A673 (cell line): ENCODE measurements at regions of chr6 and their contacts with region 1.

Region 1: GRCh38 chr6:133512410-133513016 is 271.4 kb downstream of the EYA4 start:
- DNase-seq: peak; percentile 76
- H3K4me3 ChIP-seq: no peak overlapping the region
- H3K27ac ChIP-seq: no peak overlapping the region
- H3K4me1 ChIP-seq: peaks cover 20% of the 10 kb centered on the region
- H3K27me3 ChIP-seq: peaks cover 12% of the 10 kb centered on the region
- CTCF ChIP-seq: peak; percentile 78

Region 2: DNA sequence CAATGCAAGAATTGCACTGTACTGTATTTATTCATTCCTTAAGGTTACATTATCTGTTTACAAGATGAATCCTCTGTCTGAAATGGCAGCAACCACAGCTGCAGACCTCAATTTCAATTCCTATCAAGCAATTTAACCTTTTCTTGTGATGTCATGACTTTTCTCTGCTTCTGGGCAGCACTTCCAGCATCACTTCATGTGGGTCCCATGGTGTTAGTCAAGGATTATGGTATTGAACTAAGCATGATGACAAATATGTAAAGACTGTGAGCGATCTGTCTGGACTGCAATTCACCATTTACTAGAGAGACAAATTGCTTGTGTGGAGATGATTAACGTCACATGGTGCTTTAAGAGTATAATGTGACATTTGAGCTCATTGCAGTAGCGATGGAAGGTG is 1470.8 kb before region 1 on chr6:
- CTCF ChIA-PET with region 1: no interaction called
- POLR2A ChIA-PET with region 1: no interaction called
- intact Hi-C with region 1: no loop called
- DNase-seq: no peak
- H3K4me3 ChIP-seq: no peak overlapping the region
- H3K27ac ChIP-seq: no peak overlapping the region
- H3K4me1 ChIP-seq: no peaks in the 10 kb centered on the region
- H3K27me3 ChIP-seq: no peaks in the 10 kb centered on the region
- CTCF ChIP-seq: no peak

Region 3: DNA sequence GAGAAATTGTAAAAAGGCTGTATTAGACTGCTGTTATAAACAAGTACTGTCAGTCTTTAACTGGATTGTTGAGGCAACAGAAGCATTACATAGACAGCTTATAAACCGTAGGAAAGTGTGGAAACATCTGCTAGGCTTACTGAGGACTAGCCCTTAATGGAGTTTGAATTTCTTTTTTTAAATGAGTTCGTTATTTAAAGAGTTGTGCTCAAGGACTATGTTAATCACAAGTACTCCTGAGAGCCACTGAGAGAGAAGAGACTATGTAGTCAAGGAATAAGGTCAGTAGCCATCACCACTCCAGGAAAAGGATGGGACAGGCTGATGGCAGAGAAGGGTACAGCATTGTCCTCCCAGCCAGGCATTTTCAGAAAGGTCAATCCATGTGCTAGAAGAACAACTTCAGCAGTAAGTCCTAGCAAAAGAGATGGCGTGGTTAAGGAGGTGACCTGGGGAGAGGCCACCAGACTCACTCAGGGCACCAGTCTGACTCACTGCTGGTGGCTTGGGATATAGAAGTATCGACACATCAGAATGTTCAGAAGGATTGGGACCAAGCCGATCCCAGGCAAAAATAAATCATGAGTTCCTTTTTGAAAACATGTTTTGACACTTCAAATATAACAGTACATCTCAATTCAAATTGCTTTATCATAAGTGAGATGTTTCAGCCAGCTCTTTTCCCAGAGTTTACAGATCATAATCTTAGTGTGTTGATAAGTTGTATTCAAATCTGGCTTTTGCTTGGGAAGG is 691.7 kb before region 1 on chr6:
- CTCF ChIA-PET with region 1: no interaction called
- POLR2A ChIA-PET with region 1: no interaction called
- intact Hi-C with region 1: loop called (anchors 2 kb)
- DNase-seq: no peak
- H3K4me3 ChIP-seq: no peak overlapping the region
- H3K27ac ChIP-seq: peak overlapping the region; percentile 47
- H3K4me1 ChIP-seq: peaks cover 10% of the 10 kb centered on the region
- H3K27me3 ChIP-seq: no peaks in the 10 kb centered on the region
- CTCF ChIP-seq: no peak

Region 4: DNA sequence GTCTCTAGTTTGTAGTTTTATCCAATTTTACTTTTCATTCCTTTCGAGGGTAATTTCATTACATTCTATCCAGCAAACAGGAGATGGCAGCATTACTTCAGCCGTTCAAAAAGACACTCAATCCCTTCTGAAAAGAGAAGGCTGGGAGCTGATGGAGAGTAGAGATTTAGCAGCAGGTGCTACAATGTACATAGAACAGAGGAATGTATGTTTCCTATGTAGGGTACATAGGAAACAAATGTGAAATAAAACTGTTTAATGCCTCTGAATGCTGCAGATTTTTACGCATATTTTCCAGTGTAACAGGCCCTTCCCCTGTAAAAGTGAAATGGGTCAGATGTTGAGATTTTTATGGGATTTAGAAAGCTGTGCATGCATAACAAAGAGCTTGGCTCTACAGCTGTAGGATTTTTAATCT is 682.2 kb before region 1 on chr6:
- CTCF ChIA-PET with region 1: no interaction called
- POLR2A ChIA-PET with region 1: no interaction called
- intact Hi-C with region 1: loop called (anchors 2 kb)
- DNase-seq: peak; percentile 64
- H3K4me3 ChIP-seq: no peak overlapping the region
- H3K27ac ChIP-seq: no peak overlapping the region
- H3K4me1 ChIP-seq: no peaks in the 10 kb centered on the region
- H3K27me3 ChIP-seq: no peaks in the 10 kb centered on the region
- CTCF ChIP-seq: peak; percentile 66

Region 5: GRCh38 chr6:132962936-132963868 is 549.3 kb before region 1 on chr6:
- CTCF ChIA-PET with region 1: no interaction called
- POLR2A ChIA-PET with region 1: no interaction called
- intact Hi-C with region 1: loop called (anchors 2 kb)
- DNase-seq: peak; percentile 78
- H3K4me3 ChIP-seq: no peak overlapping the region
- H3K27ac ChIP-seq: no peak overlapping the region
- H3K4me1 ChIP-seq: no peaks in the 10 kb centered on the region
- H3K27me3 ChIP-seq: peaks cover 36% of the 10 kb centered on the region
- CTCF ChIP-seq: peak; percentile 90

Region 6: GRCh38 chr6:133040094-133040802 is 472.3 kb before region 1 on chr6:
- CTCF ChIA-PET with region 1: no interaction called
- POLR2A ChIA-PET with region 1: no interaction called
- intact Hi-C with region 1: loop called (anchors 10 kb)
- DNase-seq: peak; percentile 45
- H3K4me3 ChIP-seq: no peak overlapping the region
- H3K27ac ChIP-seq: no peak overlapping the region
- H3K4me1 ChIP-seq: peaks cover 5% of the 10 kb centered on the region
- H3K27me3 ChIP-seq: no peaks in the 10 kb centered on the region
- CTCF ChIP-seq: peak; percentile 63

Region 7: DNA sequence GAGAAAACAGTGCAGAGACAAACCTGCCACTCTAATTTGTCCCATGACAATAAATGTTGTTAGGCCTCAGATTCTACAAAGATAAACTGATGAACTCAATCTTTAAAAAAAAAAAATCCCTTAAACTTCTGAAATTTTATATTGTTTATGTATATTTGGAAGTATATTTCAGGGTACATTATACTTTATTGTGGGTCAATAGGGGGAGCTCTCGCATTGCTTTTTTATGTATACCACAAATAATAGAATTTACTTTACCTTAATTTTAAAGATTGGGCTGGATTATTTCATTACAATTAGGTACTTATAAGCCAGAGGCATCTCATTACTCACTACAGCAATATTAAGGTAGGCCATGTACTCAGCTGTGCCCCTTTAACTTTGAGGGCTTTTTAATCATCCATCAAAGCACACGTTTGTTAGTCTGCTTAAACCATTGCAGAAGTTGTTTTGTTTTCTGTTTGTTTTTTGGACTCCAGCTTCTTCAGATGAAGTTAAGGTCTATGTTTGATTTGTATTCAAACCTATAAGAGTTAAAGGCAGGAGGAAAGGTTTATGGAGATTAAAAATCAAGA is 327.6 kb before region 1 on chr6:
- CTCF ChIA-PET with region 1: no interaction called
- POLR2A ChIA-PET with region 1: no interaction called
- intact Hi-C with region 1: loop called (anchors 2 kb)
- DNase-seq: peak; percentile 37
- H3K4me3 ChIP-seq: no peak overlapping the region
- H3K27ac ChIP-seq: no peak overlapping the region
- H3K4me1 ChIP-seq: no peaks in the 10 kb centered on the region
- H3K27me3 ChIP-seq: no peaks in the 10 kb centered on the region
- CTCF ChIP-seq: peak; percentile 76

Region 8: GRCh38 chr6:133286765-133287164 is 225.7 kb before region 1 on chr6:
- CTCF ChIA-PET with region 1: no interaction called
- POLR2A ChIA-PET with region 1: no interaction called
- intact Hi-C with region 1: loop called (anchors 1 kb)
- DNase-seq: peak; percentile 80
- H3K4me3 ChIP-seq: no peak overlapping the region
- H3K27ac ChIP-seq: no peak overlapping the region
- H3K4me1 ChIP-seq: peaks cover 5% of the 10 kb centered on the region
- H3K27me3 ChIP-seq: no peaks in the 10 kb centered on the region
- CTCF ChIP-seq: peak; percentile 72

Region 9: DNA sequence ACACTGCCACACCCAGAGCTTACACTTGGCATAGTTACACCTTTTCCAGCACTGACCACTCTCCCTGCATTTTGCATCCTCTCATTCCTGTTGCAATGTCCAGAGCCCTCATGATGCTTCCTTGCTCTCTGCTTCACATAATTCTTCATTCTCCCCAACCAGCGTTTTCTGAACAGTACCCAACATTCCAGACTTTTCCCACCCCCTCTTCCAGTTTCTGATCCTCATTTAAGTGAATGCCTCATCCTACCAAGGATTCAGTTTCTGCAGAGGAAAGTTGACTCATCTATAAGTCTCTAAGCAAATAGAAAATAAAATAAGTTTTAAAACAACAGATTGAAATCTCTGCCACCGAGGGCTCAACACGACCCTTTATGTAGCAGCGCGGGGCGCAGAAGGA is 55.1 kb after region 1 on chr6:
- CTCF ChIA-PET with region 1: no interaction called
- POLR2A ChIA-PET with region 1: no interaction called
- intact Hi-C with region 1: no loop called
- DNase-seq: no peak
- H3K4me3 ChIP-seq: no peak overlapping the region
- H3K27ac ChIP-seq: no peak overlapping the region
- H3K4me1 ChIP-seq: peaks cover 3% of the 10 kb centered on the region
- H3K27me3 ChIP-seq: peaks cover 88% of the 10 kb centered on the region
- CTCF ChIP-seq: no peak

Region 10: DNA sequence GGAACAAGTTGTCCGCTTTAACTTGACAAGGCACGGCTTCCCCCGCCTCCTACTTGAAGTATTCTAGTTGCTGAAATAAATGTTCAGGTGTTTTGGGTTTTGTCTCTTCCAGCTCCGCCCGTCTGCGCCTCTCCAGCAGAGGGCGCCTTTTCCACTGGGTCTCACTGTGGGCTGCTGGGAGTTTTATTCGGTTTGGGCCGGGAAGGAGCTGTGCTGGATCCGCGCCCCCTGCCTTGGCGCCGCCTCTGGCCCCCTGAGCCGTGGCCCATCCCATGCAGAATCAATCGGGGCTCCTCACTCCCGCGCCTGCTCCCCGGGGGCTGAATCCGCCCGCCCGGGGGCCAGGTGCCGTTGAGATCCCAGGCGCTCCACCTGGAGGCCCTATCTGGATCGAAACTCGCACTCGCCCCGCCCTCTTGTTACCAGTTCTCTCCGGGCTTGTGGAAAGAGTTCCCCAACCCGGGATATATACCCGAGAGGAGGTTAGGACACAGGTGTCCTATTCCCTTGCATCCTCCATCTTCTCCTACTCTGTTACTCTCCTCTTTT is 325.4 kb after region 1 on chr6:
- CTCF ChIA-PET with region 1: no interaction called
- POLR2A ChIA-PET with region 1: no interaction called
- intact Hi-C with region 1: no loop called
- DNase-seq: peak; percentile 68
- H3K4me3 ChIP-seq: peak overlapping the region; percentile 37
- H3K27ac ChIP-seq: no peak overlapping the region
- H3K4me1 ChIP-seq: no peaks in the 10 kb centered on the region
- H3K27me3 ChIP-seq: peaks cover 54% of the 10 kb centered on the region
- CTCF ChIP-seq: peak; percentile 87